ENCODE measurements at regions of chr4 and their contacts with region 1.

Region 1: DNA sequence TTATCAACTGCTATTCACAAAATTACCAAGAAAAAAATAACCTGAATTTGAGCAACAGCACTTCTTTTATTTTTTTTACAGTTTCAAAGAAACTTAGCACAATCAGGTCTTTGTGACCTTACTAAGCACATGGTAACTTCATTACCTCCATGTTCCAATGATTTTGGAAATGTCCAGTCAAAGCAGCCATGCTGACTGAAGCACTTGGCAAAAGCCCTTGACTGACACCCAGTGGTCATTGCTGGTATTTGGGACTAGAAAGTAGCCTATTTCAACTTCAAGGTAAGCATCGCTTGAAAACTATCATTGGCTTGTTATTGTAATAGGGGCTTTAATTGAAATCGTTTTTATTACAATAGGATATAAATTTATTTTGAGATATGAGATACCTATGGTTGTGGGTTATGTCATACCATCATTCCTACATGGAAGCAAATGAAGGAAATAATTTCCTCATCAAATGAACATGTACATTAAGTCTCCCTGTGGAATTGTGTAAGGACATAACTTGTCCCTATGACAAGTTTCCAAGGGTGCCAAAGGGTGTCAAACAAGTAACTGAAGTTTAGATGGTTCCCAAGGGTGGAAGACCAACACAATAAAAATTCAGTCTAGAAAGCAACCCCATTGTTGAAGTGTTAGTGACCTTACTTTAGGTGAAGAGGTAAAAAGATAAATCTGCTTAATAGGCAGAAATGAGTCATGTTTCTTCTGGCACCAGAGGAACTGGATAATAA is 15.2 kb upstream of the ANXA10 start:
- DNase-seq: peak in 9 of 10 donors; percentile 15 to 86 (median 63)

Region 2: DNA sequence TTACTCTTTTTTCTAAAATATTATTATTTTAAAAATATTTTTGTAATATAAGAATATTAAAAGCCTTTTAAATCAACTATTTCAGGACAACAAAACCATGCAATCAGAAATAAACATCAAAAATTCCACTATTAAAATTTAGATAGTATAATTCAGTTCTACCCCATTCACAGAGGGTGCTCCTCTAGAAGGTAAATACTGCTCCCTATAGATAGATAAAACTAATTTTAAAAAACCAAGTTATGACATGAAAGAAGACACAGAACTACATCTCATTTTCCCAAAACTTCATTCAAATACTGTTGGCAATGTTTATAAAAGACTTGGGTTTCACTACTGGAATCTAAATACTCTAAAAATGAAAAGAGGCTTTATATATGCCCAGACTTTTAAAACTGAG is 1062.2 kb before region 1 on chr4:
- intact Hi-C with region 1: loop called (anchors 10 kb)
- DNase-seq: no peak

Measured in posterior cingulate gyrus (tissue), 11 donors.